Right ventricle myocardium inferior (tissue), 1 donor: ENCODE measurements at regions of chr7 and their contacts with region 1.

Region 1: DNA sequence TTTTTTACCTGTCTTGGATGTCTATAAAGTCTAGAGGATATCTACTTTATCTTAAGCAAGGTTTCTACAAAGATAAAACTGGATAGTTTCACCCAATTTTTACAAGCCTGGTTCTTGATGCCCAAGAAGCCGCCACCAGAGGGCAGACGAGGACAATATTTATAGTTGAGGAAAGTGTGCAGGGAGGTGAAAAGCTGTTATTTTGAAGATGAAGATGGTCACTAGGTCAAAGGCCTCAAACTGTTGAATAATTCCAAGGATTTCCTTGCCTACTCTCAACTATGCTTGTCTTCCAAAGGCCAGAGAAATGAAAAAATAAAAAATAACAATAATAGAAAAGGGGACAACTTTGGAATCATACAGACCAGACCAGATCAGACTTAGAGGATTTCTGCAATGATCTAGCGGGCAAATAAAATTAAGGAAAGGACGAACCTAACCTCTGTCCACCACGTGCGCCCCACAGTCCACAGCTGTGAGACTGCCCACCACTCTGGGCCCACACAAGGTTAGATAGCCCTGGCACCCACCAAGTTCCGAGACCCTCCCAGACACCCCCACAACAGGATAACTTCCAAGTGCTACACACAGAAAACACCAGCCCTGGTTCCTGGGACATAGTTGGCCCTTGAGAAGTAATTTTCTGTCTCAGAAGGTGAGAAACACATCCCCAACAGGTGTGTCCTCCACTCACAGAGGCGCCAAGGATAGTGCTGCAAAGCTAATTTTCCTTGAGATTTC is 2.8 kb downstream of the PKD1L1 start:
- DNase-seq: peak; percentile 89
- ATAC-seq: no peak

Region 2: DNA sequence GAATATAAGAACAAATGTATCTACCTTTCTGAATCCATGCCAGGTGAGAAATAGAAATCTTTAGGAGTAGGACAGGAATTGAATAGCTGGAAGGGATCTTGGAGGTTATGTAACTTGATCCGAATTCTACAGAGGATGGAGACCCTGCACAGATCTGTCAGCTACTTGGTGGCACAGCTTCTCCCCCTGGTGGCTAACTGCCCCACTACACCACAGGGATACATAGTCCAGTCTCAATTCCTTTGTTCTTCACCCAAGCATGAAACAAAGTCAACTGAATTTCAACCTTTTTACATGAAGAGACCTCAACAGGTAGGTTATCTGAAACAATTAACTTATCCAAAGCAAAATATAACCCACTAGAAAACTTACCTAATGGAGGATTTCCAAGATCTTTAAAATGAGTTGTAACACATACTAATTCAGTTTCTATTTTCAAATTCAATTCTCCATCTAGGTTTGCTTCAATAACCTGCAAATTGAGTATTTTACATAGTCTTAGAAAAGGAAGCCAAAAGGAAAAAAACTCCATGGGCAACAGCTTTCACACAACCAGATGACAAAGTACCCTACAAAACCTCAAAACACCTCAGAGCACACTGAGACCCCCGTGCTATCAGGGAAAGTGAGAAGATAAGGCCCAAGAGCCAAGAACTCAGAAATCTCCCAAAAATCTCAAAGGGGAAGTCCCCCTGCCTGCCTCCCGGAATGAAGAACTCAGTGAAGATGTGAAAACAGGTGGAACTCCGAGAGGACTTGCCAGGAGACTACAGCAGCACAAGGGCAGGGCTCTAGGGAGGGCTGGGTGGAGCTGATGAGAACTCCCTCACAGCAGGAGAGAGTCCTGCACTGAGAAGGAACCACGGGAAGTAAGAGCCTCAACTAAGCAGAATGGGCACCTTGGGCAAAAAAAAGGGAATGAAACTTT is 23.7 kb after region 1 on chr7:
- intact Hi-C with region 1: loop called (anchors 1 kb)
- DNase-seq: peak; percentile 66
- ATAC-seq: no peak

Region 3: DNA sequence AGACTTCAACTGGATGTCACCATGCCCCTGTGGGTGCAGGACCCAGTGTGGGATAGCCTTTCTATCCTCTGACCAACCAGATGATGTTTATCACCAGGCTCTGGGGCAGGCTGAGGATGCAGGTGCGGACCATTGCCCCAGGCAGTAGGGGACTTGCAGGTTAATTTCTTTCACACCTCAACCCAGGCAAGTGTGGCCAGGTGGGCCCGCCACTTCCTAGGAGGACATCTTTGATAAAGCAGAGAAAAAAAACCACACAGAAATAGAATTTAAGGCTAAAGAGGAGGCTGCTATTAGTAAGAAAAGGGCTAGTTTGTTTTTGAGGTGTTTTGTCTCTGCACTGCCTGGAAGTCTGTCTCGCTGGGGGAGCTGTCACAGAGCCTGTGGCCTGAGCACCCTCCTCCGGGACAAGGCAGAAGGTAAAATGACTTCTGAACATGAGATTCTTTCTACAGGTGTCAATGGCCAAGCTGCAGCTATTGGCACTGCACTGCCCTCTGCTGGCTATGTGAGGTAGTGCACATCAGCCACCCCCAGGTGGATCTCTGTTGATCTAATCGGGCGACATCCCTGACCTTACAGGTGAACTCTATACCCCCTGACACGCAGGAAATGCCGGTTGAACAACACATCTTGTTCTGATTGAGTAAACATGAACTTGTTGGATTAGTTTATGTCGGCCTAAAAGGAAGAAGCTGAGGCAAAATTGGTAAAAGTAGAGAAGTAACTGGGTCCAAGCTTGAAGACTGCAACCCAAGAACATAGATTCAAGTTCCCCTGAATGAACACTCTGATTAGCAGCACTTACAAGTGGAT is 164.6 kb after region 1 on chr7:
- intact Hi-C with region 1: loop called (anchors 1 kb)
- DNase-seq: peak; percentile 83
- ATAC-seq: peak; percentile 58